Activated CD8-positive, alpha-beta memory T cell treated with anti-CD3 and anti-CD28 coated beads, Interleukin-2, amount 10 ng/mL, durations not matched to agents 7 days and 5 days (primary cell): ENCODE measurements at regions of chr14 and their contacts with region 1.

Region 1: DNA sequence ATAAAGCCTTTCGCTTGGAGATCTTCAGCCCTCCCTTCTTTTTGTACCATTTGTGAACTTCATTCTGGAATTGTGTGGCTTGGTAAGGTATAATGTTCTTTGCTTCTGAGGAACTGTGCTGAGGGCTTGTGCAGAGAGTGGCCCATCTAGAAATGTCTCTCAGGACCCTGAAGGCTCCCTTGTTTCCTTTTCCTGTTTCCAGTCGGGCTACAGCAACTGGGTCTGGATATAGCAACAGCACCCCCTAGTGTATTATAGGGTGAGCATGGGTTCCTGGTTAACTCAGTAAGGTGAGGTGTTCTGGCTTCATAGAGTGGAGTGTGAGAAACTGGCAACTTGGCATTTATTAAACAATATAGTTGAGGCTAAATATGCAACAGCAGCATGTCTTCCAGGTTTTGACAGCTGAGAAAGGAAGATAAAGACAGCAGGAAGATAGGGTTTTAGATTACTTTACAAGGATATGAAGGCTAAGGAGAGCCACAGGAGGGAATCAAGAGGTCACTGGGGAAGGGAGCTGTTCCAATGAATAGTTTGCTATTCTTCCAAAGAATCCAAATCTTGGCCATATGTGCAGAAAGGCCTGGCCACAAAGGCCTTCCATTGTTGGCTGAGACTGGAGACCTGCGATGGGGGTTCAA is 49.1 kb upstream of the RNU6-8 start:
- DNase-seq: peak; percentile 66
- ATAC-seq: peak; percentile 92
- H3K4me3 Mint-ChIP-seq: no peak overlapping the region
- H3K27ac Mint-ChIP-seq: no peak overlapping the region
- H3K4me1 Mint-ChIP-seq: no peaks in the 10 kb centered on the region
- H3K27me3 Mint-ChIP-seq: no peaks in the 10 kb centered on the region

Region 2: DNA sequence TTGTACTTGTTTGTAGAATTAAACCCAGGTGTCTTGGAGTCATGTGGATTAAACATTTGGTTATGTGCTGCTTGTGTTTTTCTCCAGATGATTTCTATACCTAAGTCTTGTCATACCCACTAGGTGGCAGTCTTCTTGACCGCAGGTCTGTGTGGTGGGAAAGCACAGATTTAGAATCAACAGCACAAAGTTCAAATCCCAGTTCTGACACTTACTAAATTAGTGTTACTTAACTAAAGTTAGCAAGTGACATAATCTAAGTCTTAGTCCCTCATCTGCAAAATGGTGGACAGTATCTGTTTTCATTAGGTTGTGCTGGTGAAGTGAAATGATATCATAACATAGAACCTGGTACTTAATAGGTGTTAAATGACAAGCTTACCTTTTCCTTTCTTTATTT is 326.0 kb before region 1 on chr14:
- CTCF ChIA-PET with region 1: interaction called, 17 read pairs
- DNase-seq: peak; percentile 45
- ATAC-seq: peak; percentile 45
- H3K4me3 Mint-ChIP-seq: no peak overlapping the region
- H3K27ac Mint-ChIP-seq: no peak overlapping the region
- H3K4me1 Mint-ChIP-seq: peaks cover 8% of the 10 kb centered on the region
- H3K27me3 Mint-ChIP-seq: peaks cover 3% of the 10 kb centered on the region

Region 3: DNA sequence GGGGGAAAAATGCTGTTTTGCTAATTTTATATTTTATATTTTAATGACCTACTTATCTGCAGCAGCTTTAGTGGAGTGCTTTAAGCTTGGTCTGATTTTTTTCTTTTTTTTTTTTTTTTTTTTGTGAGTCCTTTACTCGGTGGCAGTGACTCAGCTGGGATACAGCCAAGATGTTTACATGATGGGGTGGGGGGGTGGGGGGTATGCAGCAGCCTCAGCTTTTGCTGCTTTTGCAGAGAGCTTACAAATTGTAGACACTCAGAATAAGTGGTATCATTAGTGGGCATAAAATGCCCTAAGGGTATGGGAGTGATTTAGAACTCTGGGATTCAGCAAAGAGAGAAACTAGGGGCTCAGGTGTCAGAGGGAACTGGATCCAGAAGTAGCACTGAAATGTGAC is 213.3 kb before region 1 on chr14:
- CTCF ChIA-PET with region 1: no interaction called
- DNase-seq: no peak
- ATAC-seq: no peak
- H3K4me3 Mint-ChIP-seq: no peak overlapping the region
- H3K27ac Mint-ChIP-seq: no peak overlapping the region
- H3K4me1 Mint-ChIP-seq: peaks cover 4% of the 10 kb centered on the region
- H3K27me3 Mint-ChIP-seq: peaks cover 33% of the 10 kb centered on the region

Region 4: DNA sequence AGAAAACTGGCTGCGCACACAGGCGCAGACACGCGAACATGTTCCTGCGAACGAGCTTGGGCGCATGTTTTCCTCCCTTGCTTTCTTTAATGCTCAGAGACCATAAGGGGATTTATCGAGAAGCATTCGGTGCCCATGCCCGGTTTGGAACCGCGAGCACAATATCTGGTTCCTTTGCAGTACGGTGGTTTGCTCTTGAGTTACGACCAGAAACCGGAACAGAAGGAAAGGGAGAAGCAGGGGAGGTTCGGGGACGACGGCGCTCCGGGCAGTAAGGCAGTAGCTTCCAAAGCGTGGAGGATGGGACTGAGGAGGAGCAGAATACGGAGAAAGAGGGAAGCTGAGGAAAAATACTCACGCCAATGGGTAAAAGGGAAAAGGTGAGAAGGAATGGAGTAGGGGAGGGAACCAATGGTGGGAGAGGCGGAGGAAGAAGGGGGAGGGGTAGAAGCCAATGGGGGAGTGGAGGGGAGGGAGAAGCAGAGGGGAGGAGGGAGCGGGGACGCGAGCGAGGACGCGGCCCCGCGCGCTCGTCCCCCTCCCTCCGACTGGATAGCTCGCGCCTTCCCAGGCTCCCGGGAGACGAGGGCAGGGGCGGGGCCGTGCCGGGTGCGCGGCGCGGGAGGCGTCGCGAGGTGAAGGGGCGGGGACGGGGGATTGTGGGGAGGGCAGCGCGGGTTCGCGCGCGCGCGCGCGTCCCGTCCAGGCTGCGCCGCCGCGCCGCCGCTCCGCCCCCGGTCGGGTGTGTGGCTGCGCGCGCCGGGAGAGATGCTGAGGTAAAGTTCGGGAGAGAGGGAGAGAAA is 175.7 kb before region 1 on chr14:
- CTCF ChIA-PET with region 1: interaction called, 129 read pairs
- DNase-seq: peak; percentile 83
- ATAC-seq: peak; percentile 72
- H3K4me3 Mint-ChIP-seq: peak overlapping the region; percentile 84
- H3K27ac Mint-ChIP-seq: peak overlapping the region; percentile 79
- H3K4me1 Mint-ChIP-seq: peaks cover 27% of the 10 kb centered on the region
- H3K27me3 Mint-ChIP-seq: peaks cover 16% of the 10 kb centered on the region